Activated CD8-positive, alpha-beta memory T cell treated with anti-CD3 and anti-CD28 coated beads, Interleukin-2, amount 10 ng/mL, durations not matched to agents 7 days and 5 days (primary cell): ENCODE measurements at regions of chr18 and their contacts with region 1.

Region 1: GRCh38 chr18:45664824-45665763 is 49.8 kb downstream of the SLC14A2 start:
- DNase-seq: peak; percentile 82
- ATAC-seq: peak; percentile 53
- H3K4me3 Mint-ChIP-seq: no peak overlapping the region
- H3K27ac Mint-ChIP-seq: peak overlapping the region; percentile 95
- H3K4me1 Mint-ChIP-seq: peaks cover 56% of the 10 kb centered on the region
- H3K27me3 Mint-ChIP-seq: no peaks in the 10 kb centered on the region

Region 2: GRCh38 chr18:45690975-45691815 is 26.1 kb after region 1 on chr18:
- CTCF ChIA-PET with region 1: interaction called, 234 read pairs
- DNase-seq: peak; percentile 84
- ATAC-seq: no peak
- H3K4me3 Mint-ChIP-seq: no peak overlapping the region
- H3K27ac Mint-ChIP-seq: no peak overlapping the region
- H3K4me1 Mint-ChIP-seq: peaks cover 51% of the 10 kb centered on the region
- H3K27me3 Mint-ChIP-seq: peaks cover 5% of the 10 kb centered on the region

Region 3: DNA sequence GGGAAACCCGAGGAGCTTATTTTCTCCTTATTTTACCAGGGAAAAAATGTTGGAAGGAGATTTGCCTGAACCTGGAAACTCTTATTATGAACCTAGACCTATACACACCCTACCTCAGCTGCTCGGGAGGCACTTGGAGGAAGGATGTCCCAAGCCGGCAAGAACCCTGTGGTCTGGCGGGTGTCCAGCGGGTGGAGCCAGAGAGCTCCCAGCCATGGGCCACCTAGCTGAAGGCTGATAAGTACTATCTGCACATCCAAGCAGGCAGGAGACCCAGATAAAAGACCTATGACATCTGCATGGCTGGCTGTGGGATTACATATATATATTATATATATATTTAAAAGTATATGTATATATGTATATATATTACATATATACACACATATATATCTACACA is 57.8 kb after region 1 on chr18:
- CTCF ChIA-PET with region 1: interaction called, 40 read pairs
- DNase-seq: peak; percentile 80
- ATAC-seq: peak; percentile 87
- H3K4me3 Mint-ChIP-seq: no peak overlapping the region
- H3K27ac Mint-ChIP-seq: no peak overlapping the region
- H3K4me1 Mint-ChIP-seq: peaks cover 5% of the 10 kb centered on the region
- H3K27me3 Mint-ChIP-seq: peaks cover 2% of the 10 kb centered on the region

Region 4: GRCh38 chr18:45839414-45840395 is 174.6 kb after region 1 on chr18:
- CTCF ChIA-PET with region 1: interaction called, 12 read pairs
- DNase-seq: peak; percentile 55
- ATAC-seq: peak; percentile 55
- H3K4me3 Mint-ChIP-seq: no peak overlapping the region
- H3K27ac Mint-ChIP-seq: no peak overlapping the region
- H3K4me1 Mint-ChIP-seq: peaks cover 6% of the 10 kb centered on the region
- H3K27me3 Mint-ChIP-seq: peaks cover 47% of the 10 kb centered on the region

Region 5: GRCh38 chr18:45910405-45911023 is 245.4 kb after region 1 on chr18:
- CTCF ChIA-PET with region 1: interaction called, 27 read pairs
- DNase-seq: peak; percentile 75
- ATAC-seq: peak; percentile 84
- H3K4me3 Mint-ChIP-seq: no peak overlapping the region
- H3K27ac Mint-ChIP-seq: no peak overlapping the region
- H3K4me1 Mint-ChIP-seq: no peaks in the 10 kb centered on the region
- H3K27me3 Mint-ChIP-seq: no peaks in the 10 kb centered on the region

Region 6: DNA sequence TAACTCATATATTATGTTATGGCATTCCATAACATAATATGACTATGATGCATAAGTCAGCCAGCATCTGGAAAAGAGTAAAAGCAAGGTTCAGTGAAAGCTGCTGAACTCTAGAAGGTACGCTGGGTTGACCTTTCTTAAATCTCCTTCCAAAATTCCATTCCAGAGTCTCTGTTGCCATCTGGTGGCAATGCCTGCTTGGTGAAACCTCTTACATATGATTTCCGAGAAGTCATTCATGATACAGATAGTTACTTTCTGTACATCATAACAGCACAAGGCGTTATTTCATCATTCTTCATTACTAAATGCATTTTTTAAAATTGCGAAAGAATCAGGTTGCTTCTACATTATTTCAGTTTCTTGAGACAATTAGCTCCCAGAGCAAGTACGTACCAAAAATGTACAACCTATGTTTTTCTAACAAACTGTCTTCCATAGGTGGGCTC is 309.0 kb after region 1 on chr18:
- CTCF ChIA-PET with region 1: interaction called, 48 read pairs
- DNase-seq: peak; percentile 85
- ATAC-seq: peak; percentile 91
- H3K4me3 Mint-ChIP-seq: peak overlapping the region; percentile 13
- H3K27ac Mint-ChIP-seq: peak overlapping the region; percentile 62
- H3K4me1 Mint-ChIP-seq: peaks cover 8% of the 10 kb centered on the region
- H3K27me3 Mint-ChIP-seq: no peaks in the 10 kb centered on the region

Region 7: GRCh38 chr18:46073474-46074331 is 408.6 kb after region 1 on chr18:
- CTCF ChIA-PET with region 1: interaction called, 44 read pairs
- DNase-seq: peak; percentile 59
- ATAC-seq: peak; percentile 58
- H3K4me3 Mint-ChIP-seq: no peak overlapping the region
- H3K27ac Mint-ChIP-seq: peak overlapping the region; percentile 33
- H3K4me1 Mint-ChIP-seq: peaks cover 29% of the 10 kb centered on the region
- H3K27me3 Mint-ChIP-seq: peaks cover 6% of the 10 kb centered on the region